ENCODE measurements at regions of chr2 and their contacts with region 1.

Region 1: GRCh38 chr2:42072349-42073118 is 24.7 kb downstream of the PKDCC start:
- DNase-seq: peak; percentile 54
- ATAC-seq: peak; percentile 78
- H3K4me3 ChIP-seq: no peak overlapping the region
- H3K27ac ChIP-seq: no peak overlapping the region
- H3K4me1 ChIP-seq: peaks cover 28% of the 10 kb centered on the region
- H3K27me3 ChIP-seq: peaks cover 2 to 38% of the 10 kb centered on the region in 2 experiments; a peak in 3 of 5 replicates
- CTCF ChIP-seq: peak; percentile 61
- EP300 ChIP-seq: no peak
- POLR2A ChIP-seq: no peak
- RAD21 ChIP-seq: 0 out of 2 replicates have a peak, but pooled peaks have one; percentile 47

Region 2: DNA sequence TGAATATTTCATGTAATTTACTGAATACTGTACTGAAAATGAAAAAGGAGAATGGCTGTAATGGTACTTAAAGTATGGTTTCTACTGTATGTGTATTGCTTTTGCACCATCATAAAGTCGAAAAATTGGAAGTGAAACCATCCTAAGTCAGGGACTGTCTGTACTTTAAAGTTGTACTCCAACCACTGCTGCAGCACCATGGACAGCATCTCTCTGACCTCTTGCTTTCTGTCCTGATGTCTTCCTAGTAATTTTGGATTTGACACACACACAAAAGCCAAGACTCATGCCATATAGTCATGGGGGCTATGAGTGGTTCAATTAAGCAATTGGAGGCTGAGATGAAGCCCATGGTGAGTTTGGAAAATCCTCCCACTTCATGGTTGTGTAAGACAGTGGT is 281.0 kb before region 1 on chr2:
- CTCF ChIA-PET with region 1: no interaction called
- POLR2A ChIA-PET with region 1: no interaction called
- in situ Hi-C with region 1: no loop called
- intact Hi-C with region 1: no loop called
- DNase-seq: peak; percentile 20
- ATAC-seq: 0 out of 3 replicates have a peak, but pooled peaks have one; percentile 46
- H3K4me3 ChIP-seq: no peak overlapping the region
- H3K27ac ChIP-seq: no peak overlapping the region
- H3K4me1 ChIP-seq: no peaks in the 10 kb centered on the region
- H3K27me3 ChIP-seq: no peaks in the 10 kb centered on the region
- CTCF ChIP-seq: no peak
- EP300 ChIP-seq: no peak
- POLR2A ChIP-seq: no peak
- RAD21 ChIP-seq: no peak

Region 3: GRCh38 chr2:42053791-42054701 is 18.5 kb before region 1 on chr2:
- CTCF ChIA-PET with region 1: interaction called, 3 read pairs
- POLR2A ChIA-PET with region 1: interaction called, 19 read pairs
- in situ Hi-C with region 1: no loop called
- intact Hi-C with region 1: no loop called
- DNase-seq: peak; percentile 55
- ATAC-seq: peak; percentile 28
- H3K4me3 ChIP-seq: peak overlapping the region in 1 of 3 experiments; percentile 32; a peak in 2 of 6 replicates
- H3K27ac ChIP-seq: peak overlapping the region; percentile 39
- H3K4me1 ChIP-seq: peaks cover 91% of the 10 kb centered on the region
- H3K27me3 ChIP-seq: peaks cover 0 to under 1% of the 10 kb centered on the region in 2 experiments; a peak in 1 of 5 replicates
- CTCF ChIP-seq: 0 out of 2 replicates have a peak, but pooled peaks have one; percentile 8
- EP300 ChIP-seq: peak in 1 of 2 experiments; percentile 75; a peak in 2 of 4 replicates
- POLR2A ChIP-seq: no peak
- RAD21 ChIP-seq: no peak